Heart left ventricle (tissue), 16 donors: ENCODE measurements at regions of chr16 and their contacts with region 1.

Region 1: DNA sequence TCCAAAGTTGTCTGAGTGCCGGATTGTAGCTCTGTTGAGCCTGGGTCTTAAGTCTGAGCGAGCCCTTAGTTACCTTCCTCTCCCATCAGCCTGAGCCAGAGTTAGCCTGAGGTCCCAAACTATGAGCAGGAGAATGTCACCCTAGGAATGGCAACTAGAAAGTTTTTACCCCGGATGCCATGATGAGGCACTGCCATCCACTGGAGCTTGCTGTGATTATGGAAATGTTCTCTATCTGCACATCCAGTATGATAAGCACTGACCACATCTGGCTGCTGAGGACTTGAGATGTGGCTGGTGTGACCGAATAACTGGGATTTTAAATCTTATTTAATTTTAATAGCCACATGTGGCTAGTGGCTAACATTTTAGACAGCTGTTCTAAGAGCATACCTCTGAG is 550.0 kb downstream of the CDH13 start:
- DNase-seq: no peak
- ATAC-seq: no peak
- H3K4me3 ChIP-seq: no peak overlapping the region
- H3K27ac ChIP-seq: no peak overlapping the region
- H3K4me1 ChIP-seq: no peaks in the 10 kb centered on the region
- H3K27me3 ChIP-seq: no peaks in the 10 kb centered on the region
- CTCF ChIP-seq: no peak
- POLR2A ChIP-seq: no peak

Region 2: GRCh38 chr16:83160287-83161020 is 16.3 kb before region 1 on chr16:
- intact Hi-C with region 1: loop called in 1 of 10 experiments (anchors 2 kb)
- DNase-seq: no peak
- ATAC-seq: no peak
- H3K4me3 ChIP-seq: no peak overlapping the region
- H3K27ac ChIP-seq: no peak overlapping the region
- H3K4me1 ChIP-seq: no peaks in the 10 kb centered on the region
- H3K27me3 ChIP-seq: no peaks in the 10 kb centered on the region
- CTCF ChIP-seq: no peak
- POLR2A ChIP-seq: no peak

Region 3: DNA sequence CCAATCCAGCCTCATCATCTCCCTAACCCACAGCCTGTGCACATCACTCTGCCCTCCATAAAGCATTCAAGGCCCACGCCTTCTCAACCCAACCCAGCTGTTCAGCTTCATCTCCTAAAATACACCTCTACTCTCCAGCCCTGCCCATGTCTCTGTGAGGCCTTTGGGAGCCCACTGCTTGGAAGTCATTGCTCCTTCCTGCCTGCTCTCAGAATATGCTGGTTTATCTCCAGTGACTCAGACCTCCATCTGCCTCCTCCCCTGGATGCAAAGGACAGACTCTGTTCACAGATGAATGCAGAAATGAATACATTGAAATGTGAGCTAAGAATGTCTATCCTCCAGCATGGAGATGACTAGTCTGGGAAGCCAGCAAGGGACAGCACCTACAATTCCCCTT is 1044.0 kb after region 1 on chr16:
- intact Hi-C with region 1: no loop called
- DNase-seq: no peak
- ATAC-seq: no peak
- H3K4me3 ChIP-seq: no peak overlapping the region
- H3K27ac ChIP-seq: no peak overlapping the region
- H3K4me1 ChIP-seq: no peaks in the 10 kb centered on the region
- H3K27me3 ChIP-seq: peaks cover 0 to 3% (median 0%) of the 10 kb centered on the region in 9 donors
- CTCF ChIP-seq: no peak
- POLR2A ChIP-seq: no peak